ENCODE measurements at regions of chr17 and their contacts with region 1.

Region 1: DNA sequence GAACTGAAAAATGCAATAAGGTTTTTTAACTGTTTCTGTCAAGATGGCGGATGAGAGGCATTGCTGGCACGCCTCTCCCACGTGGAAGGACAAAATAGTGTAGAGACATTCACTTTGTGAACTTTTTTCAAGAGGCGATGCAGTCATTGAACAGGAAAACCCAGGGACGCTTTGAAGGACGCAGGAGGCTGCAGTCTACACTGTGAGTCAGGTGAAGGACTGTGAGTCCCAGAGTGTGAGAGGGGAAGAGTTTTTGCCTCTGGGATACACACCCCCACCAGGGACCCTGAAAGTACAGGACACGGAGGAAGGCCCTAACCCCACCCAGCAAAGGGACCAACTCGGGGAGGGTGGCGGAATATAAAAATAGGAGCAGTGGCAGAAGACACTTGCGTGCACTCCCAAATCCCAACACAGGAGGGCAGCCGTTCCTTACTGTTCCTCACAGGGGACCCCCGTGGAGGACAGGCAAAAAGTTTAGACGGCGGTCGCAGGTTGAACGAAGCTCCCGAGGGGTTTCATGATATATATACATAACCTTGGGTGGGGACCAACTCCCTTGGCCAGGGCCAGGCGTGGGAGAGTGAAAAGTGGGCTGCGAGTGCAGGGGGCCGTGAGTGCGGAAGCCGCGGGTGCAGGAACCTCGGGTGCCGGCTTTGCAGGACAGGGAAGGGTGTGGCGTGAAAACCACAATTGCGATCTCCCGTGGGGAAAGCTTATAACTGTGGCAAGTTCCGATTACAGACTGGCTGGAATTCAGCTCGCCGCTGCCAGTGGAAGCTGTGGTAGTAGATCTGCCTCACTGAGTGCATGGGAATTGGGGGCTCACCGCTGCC is 82.0 kb upstream of the ALOX12 start:
- DNase-seq: peak; percentile 77 to 87 (median 84)
- H3K4me3 ChIP-seq: peak overlapping the region in 6 of 7 experiments; percentile 16 to 73 (median 54)
- H3K27ac ChIP-seq: no peak overlapping the region
- H3K4me1 ChIP-seq: peaks cover 7 to 22% (median 9%) of the 10 kb centered on the region in 4 experiments
- H3K27me3 ChIP-seq: peaks cover 0 to 5% (median 0%) of the 10 kb centered on the region in 5 experiments

Region 2: GRCh38 chr17:6729531-6729930 is 184.3 kb before region 1 on chr17:
- CTCF ChIA-PET with region 1: no interaction called
- POLR2A ChIA-PET with region 1: no interaction called
- DNase-seq: no peak
- H3K4me3 ChIP-seq: no peak overlapping the region
- H3K27ac ChIP-seq: no peak overlapping the region
- H3K4me1 ChIP-seq: no peaks in the 10 kb centered on the region
- H3K27me3 ChIP-seq: peaks cover 0 to 8% (median 1%) of the 10 kb centered on the region in 5 experiments

Region 3: DNA sequence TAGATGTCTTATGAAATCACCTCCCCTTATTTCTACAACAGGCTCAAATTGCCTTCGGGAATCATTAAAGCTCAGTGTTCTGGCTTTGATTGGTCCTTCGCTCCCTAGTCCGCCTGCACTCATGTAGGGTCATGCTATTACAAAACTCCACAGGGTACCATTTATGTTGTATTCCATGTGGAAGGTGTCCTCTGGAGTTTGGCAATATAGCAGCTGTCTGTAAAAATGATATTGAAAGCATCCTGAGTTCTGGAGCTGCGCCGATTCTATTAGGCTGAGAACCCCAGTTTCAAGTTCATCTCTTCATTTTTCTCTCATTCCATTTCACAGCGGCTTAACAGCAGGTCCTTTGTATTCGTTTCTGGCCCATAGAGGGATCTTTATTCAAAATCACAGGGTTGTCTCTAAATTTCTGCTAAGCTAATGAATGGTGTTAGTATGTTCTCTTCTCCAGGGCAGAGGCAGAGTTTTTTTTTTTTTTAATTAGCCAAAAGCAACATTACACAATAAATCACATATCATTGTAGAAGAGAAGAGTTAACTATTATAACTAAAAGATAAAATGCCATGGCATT is 10.4 kb before region 1 on chr17:
- CTCF ChIA-PET with region 1: interaction called, 10 read pairs
- POLR2A ChIA-PET with region 1: no interaction called
- DNase-seq: no peak
- H3K4me3 ChIP-seq: no peak overlapping the region
- H3K27ac ChIP-seq: no peak overlapping the region
- H3K4me1 ChIP-seq: peaks cover 0 to 14% (median 4%) of the 10 kb centered on the region in 4 experiments
- H3K27me3 ChIP-seq: no peaks in the 10 kb centered on the region

Region 4: DNA sequence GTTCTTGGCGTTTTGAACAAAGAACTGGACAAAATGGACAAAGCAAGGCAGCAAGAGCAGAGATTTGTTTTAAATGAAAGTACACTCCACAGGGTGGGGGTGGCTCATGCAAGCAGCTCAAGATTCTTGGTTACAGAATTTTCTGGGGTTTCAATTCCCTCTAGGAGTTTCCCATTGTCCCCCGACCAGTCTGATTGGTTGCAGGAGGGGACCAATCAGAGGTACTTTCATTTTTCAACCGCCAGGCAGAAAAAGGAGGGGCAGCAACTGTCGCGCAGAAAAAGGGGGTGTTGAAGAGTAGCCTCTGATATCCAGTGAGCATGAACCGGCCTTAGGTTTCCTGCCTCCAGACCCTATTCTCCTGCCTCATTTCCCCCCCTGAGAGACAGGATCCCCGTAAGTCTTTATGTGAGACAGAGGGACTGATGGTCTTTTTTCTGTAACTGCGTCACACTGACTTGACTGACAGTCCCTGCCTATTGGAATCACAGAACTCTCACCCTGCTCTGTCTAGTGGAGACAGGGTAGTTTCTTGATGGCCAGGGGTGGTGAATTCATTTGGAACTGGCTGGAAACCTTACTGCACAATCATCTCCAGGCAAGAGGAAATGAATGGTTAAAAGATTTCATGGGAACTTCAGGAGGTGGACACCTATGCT is 22.7 kb after region 1 on chr17:
- CTCF ChIA-PET with region 1: interaction called, 20 read pairs
- POLR2A ChIA-PET with region 1: no interaction called
- DNase-seq: peak in 2 of 3 donors; percentile 42 to 53
- H3K4me3 ChIP-seq: peak overlapping the region in 4 of 7 experiments; percentile 14 to 36 (median 24)
- H3K27ac ChIP-seq: peak overlapping the region in 1 of 2 experiments; percentile 59
- H3K4me1 ChIP-seq: peaks cover 0 to 7% (median 2%) of the 10 kb centered on the region in 4 experiments
- H3K27me3 ChIP-seq: no peaks in the 10 kb centered on the region

Region 5: GRCh38 chr17:6995431-6996255 is 81.8 kb after region 1 on chr17 and contains the start of gene ALOX12:
- CTCF ChIA-PET with region 1: interaction called, 266 read pairs
- POLR2A ChIA-PET with region 1: no interaction called
- DNase-seq: peak in 1 of 3 donors; percentile 38
- H3K4me3 ChIP-seq: peak within 1 kb of the TSS in 5 of 7 experiments; percentile 15 to 61 (median 24)
- H3K27ac ChIP-seq: peak within 1 kb of the TSS in 1 of 2 experiments; percentile 26
- H3K4me1 ChIP-seq: peaks cover 3 to 31% (median 18%) of the 10 kb centered on the region in 4 experiments
- H3K27me3 ChIP-seq: no peaks in the 10 kb centered on the region

Region 6: GRCh38 chr17:7021993-7022778 is 108.4 kb after region 1 on chr17:
- CTCF ChIA-PET with region 1: interaction called, 36 read pairs
- POLR2A ChIA-PET with region 1: interaction called, 8 read pairs
- DNase-seq: peak; percentile 74 to 95 (median 95)
- H3K4me3 ChIP-seq: peak overlapping the region; percentile 2 to 74 (median 45)
- H3K27ac ChIP-seq: peak overlapping the region in 1 of 2 experiments; percentile 25
- H3K4me1 ChIP-seq: peaks cover 3 to 58% (median 41%) of the 10 kb centered on the region in 4 experiments
- H3K27me3 ChIP-seq: peaks cover 0 to 3% (median 0%) of the 10 kb centered on the region in 5 experiments